CD8-positive, alpha-beta T cell (primary cell): ENCODE measurements at regions of chr22 and their contacts with region 1.

Region 1: DNA sequence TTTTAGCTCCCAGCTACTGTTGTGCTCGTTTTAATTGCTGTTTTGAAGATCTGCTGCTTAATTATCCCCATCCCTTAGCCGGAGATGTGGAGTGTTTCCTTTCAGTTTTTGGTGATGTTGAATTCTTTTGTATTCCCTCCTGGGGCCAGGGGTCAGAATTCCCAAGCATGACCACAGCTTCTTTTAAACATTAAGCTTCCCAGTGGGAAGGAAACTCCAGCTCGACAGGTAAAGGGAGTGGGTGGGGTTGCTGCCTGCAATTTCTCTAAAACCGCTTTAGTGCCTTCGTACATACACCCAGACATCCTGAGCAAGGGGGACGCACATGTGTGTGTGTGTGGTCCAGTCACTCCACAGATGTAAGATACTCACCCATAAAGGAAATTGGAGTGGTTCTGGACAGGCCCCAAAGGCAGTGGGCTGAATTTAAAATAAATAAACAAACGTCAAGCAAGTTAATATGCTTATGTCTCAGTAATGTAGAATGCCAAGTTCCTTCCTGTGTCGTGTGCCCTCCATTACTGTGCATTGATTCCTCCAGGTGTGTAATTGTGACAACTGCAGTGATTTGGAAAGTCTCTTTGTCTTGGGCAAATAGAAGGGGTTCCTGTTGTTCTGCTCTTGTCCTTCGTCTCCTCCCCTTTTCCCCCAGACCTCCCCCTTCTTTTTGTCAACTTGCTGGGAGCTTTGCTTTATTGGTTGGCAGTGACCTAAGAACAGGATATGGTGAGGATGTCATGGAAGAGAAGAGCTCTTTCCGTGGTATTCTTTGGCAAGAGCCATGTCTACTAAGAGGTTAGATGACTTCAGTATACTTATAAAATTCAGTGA is 19.2 kb upstream of the ADSL start:
- DNase-seq: peak in 2 of 9 experiments; percentile 44 to 62
- ATAC-seq: peak; percentile 7
- H3K4me3 ChIP-seq: peak overlapping the region in 1 of 2 experiments; percentile 3
- H3K4me3 Mint-ChIP-seq: peak overlapping the region; percentile 53
- H3K27ac ChIP-seq: peak overlapping the region; percentile 9 to 54
- H3K27ac Mint-ChIP-seq: peak overlapping the region; percentile 92
- H3K4me1 ChIP-seq: peaks cover 96% of the 10 kb centered on the region
- H3K4me1 Mint-ChIP-seq: peaks cover 99% of the 10 kb centered on the region
- H3K27me3 ChIP-seq: no peaks in the 10 kb centered on the region
- H3K27me3 Mint-ChIP-seq: no peaks in the 10 kb centered on the region
- CTCF ChIP-seq: no peak

Region 2: DNA sequence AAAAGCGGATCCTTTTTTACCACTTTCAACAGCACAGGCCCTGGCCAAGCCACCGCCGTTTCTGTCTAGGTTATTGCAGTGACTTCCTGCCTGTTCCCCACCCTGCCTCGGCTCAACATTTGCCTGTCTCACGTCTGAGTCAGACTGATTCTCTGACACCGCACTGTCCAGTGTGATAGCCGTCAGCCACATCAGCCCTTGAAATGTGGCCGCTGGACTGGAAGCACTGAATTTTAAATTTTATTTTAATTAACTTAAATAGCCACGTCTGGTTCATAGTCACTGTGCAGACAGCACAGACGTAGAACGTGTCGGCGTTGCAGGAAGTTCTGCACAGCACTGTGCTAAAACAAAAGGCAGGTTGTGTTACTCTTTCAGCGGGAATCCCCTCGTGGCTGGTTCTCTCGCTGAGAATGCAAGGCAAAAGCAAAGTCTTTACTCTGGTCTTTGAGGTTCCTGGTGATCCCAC is 37.1 kb before region 1 on chr22:
- CTCF ChIA-PET with region 1: interaction called, 3 read pairs
- POLR2A ChIA-PET with region 1: interaction called, 3 read pairs
- intact Hi-C with region 1: loop called (anchors 1 to 5 kb)
- DNase-seq: peak; percentile 52 to 91 (median 76)
- ATAC-seq: peak; percentile 86
- H3K4me3 ChIP-seq: peak overlapping the region in 1 of 2 experiments; percentile 6
- H3K4me3 Mint-ChIP-seq: peak overlapping the region; percentile 59
- H3K27ac ChIP-seq: peak overlapping the region; percentile 58 to 85
- H3K27ac Mint-ChIP-seq: peak overlapping the region; percentile 98
- H3K4me1 ChIP-seq: peaks cover 31% of the 10 kb centered on the region
- H3K4me1 Mint-ChIP-seq: peaks cover 59% of the 10 kb centered on the region
- H3K27me3 ChIP-seq: no peaks in the 10 kb centered on the region
- H3K27me3 Mint-ChIP-seq: no peaks in the 10 kb centered on the region
- CTCF ChIP-seq: no peak

Region 3: DNA sequence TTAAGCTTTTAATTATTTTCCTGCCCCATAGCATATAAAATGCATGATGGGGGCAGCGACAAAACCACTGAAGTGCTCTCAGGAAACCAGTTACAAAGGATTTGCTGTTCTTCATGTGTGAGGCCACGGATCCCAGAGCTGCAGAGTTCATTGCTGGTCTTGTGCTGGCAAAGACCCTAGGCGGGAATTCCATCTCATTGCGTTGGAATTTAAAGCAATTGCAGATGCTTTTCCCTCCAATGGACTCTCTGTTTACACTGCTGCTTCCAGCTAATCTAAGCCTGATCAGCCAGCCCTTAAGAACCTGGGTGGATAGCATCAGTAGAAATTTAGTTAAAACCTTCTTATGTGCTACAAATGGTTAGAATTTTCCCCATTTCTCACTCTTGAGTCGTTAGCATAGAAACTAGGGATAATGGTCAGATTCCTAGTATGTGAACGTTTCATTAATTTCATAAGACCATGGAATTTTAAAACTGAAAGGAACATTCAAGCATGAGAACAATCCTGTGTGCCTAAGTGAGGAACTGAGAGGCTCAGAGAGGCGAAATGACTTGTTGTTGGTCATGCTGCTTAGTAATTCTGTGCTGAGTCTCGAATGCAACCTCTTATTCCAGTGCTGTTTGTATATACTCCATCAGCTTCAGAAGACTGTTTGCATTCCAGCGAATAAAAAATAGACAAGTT is 16.9 kb before region 1 on chr22:
- CTCF ChIA-PET with region 1: no interaction called
- POLR2A ChIA-PET with region 1: interaction called, 6 read pairs
- intact Hi-C with region 1: loop called in 1 of 2 experiments (anchors 2 kb)
- DNase-seq: no peak
- ATAC-seq: no peak
- H3K4me3 ChIP-seq: no peak overlapping the region
- H3K4me3 Mint-ChIP-seq: no peak overlapping the region
- H3K27ac ChIP-seq: no peak overlapping the region
- H3K27ac Mint-ChIP-seq: peak overlapping the region; percentile 53
- H3K4me1 ChIP-seq: peaks cover 28% of the 10 kb centered on the region
- H3K4me1 Mint-ChIP-seq: peaks cover 46% of the 10 kb centered on the region
- H3K27me3 ChIP-seq: no peaks in the 10 kb centered on the region
- H3K27me3 Mint-ChIP-seq: no peaks in the 10 kb centered on the region
- CTCF ChIP-seq: no peak

Region 4: DNA sequence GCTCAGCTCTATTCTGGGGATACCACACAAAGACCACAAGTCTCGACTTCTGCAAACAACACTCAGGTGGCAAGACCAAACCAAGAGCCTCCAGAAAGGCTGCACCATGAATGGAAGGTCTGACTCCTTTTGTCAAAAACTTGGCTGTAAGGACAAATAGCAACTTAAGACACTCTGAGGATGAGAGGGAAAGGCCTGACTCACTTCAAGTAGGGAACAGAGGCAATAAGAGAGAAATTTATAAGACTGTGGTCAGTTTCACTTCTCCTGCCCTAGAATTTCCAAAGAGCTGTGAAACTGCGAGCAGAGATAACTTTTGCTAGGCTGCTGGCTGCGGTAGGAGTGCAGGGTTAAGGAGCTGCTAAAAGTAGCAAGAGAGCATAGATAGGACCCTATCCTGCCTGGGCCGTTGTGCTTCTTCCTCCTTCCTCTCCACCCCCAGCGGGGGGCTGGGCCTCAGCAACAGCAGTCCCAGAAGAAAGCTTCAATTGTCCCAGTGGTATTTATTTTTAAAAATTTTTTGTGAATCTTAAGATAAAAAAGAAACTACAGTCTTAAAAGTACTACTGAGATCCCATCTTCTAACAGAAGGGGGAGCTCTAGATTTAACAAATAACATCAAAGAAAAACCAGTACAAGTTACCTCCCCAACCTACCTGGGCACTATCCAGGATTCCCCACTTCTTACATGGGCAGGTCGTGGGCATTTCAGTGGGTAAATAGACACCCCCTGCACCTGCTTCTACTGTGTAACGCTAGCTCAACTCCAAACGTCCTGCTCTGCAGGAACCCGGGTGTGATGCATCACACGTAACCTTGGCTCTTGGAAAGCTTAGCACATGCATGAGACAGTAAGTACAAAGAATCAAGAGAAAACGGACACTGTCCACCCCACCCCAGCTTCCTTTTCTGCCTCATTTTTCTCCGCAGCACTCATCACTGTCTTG is 109.7 kb after region 1 on chr22:
- CTCF ChIA-PET with region 1: no interaction called
- POLR2A ChIA-PET with region 1: no interaction called
- intact Hi-C with region 1: no loop called
- DNase-seq: peak in 4 of 9 experiments; percentile 24 to 79 (median 66)
- ATAC-seq: peak; percentile 78
- H3K4me3 ChIP-seq: no peak overlapping the region
- H3K4me3 Mint-ChIP-seq: peak overlapping the region; percentile 37
- H3K27ac ChIP-seq: peak overlapping the region in 1 of 2 experiments; percentile 60
- H3K27ac Mint-ChIP-seq: peak overlapping the region; percentile 73
- H3K4me1 ChIP-seq: peaks cover 44% of the 10 kb centered on the region
- H3K4me1 Mint-ChIP-seq: peaks cover 61% of the 10 kb centered on the region
- H3K27me3 ChIP-seq: no peaks in the 10 kb centered on the region
- H3K27me3 Mint-ChIP-seq: no peaks in the 10 kb centered on the region
- CTCF ChIP-seq: peak; percentile 80